Sigmoid colon (tissue), 7 donors: ENCODE measurements at regions of chr19 and their contacts with region 1.

Region 1: GRCh38 chr19:5690125-5690954 is at the start of gene RPL36:
- DNase-seq: peak; percentile 99
- H3K4me3 ChIP-seq: peak within 1 kb of the TSS; percentile 61 to 85 (median 67)
- H3K27ac ChIP-seq: peak within 1 kb of the TSS; percentile 89 to 96 (median 91)
- H3K4me1 ChIP-seq: peaks cover 0 to 46% (median 37%) of the 10 kb centered on the region in 4 donors
- H3K27me3 ChIP-seq: no peaks in the 10 kb centered on the region
- CTCF ChIP-seq: peak; percentile 94 to 97 (median 97)
- EP300 ChIP-seq: no peak
- POLR2A ChIP-seq: peak; percentile 90 to 93
- total RNA-seq, gene RPL36: 593 to 1,408 (median 902) TPM

Region 2: GRCh38 chr19:5345895-5346386 is 344.4 kb before region 1 on chr19:
- intact Hi-C with region 1: no loop called
- DNase-seq: no peak
- H3K4me3 ChIP-seq: no peak overlapping the region
- H3K27ac ChIP-seq: no peak overlapping the region
- H3K4me1 ChIP-seq: peaks cover 0 to 2% (median 2%) of the 10 kb centered on the region in 4 donors
- H3K27me3 ChIP-seq: peaks cover 0 to 4% (median 0%) of the 10 kb centered on the region in 3 donors
- CTCF ChIP-seq: no peak
- EP300 ChIP-seq: no peak
- POLR2A ChIP-seq: no peak

Region 3: DNA sequence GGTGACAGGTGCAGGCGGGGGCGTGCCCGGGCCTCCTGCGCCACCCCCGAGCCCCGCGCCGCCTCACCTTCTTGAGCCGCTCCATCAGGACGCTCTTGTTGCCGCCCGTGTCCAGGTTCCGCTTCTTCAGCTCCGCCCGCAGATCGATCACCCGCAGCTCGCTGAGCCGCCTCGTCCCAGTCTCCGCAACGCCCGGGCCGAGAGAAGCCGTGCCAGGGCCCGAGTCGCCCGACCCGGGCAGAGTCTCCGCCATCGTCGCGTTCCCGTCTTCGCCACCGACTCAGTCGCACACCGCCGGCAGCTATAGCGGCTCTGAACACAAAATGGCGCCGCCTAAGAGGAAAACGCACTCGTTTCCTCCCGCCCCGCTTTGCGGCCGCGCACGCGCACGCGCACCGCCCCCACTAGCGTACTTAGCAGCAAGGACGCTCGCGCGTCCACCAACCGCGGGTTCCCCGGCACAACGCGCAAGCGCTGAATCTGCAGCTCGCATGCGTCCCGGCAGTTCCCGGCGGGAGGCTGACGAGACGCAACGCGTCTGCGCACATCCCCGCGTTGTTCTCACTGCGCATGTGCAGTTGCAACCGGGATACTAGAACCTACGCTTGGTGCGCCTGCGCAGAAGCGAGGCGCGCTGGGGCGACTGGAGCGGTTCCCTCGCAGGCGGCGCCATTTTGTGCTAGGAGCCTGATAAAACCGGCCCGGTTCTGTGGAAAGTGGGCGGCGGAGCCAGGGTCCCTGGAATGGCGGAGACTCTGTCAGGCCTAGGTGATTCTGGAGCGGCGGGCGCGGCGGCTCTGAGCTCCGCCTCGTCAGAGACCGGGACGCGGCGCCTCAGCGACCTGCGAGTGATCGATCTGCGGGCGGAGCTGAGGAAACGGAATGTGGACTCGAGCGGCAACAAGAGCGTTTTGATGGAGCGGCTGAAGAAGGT is 67.6 kb before region 1 on chr19 and contains the starts of genes SAFB and SAFB2:
- intact Hi-C with region 1: loop called (anchors 2 kb)
- DNase-seq: peak; percentile 100
- H3K4me3 ChIP-seq: peak within 1 kb of the TSS; percentile 78 to 95 (median 88)
- H3K27ac ChIP-seq: peak within 1 kb of the TSS; percentile 95 to 99 (median 98)
- H3K4me1 ChIP-seq: peaks cover 0 to 72% (median 67%) of the 10 kb centered on the region in 4 donors
- H3K27me3 ChIP-seq: no peaks in the 10 kb centered on the region
- CTCF ChIP-seq: no peak
- EP300 ChIP-seq: peak in 1 of 4 donors; percentile 14
- POLR2A ChIP-seq: peak; percentile 95 to 96
- total RNA-seq, gene SAFB: 48.9 to 75.9 (median 60.4) TPM
- total RNA-seq, gene SAFB2: 22.8 to 80.0 (median 38.1) TPM

Region 4: DNA sequence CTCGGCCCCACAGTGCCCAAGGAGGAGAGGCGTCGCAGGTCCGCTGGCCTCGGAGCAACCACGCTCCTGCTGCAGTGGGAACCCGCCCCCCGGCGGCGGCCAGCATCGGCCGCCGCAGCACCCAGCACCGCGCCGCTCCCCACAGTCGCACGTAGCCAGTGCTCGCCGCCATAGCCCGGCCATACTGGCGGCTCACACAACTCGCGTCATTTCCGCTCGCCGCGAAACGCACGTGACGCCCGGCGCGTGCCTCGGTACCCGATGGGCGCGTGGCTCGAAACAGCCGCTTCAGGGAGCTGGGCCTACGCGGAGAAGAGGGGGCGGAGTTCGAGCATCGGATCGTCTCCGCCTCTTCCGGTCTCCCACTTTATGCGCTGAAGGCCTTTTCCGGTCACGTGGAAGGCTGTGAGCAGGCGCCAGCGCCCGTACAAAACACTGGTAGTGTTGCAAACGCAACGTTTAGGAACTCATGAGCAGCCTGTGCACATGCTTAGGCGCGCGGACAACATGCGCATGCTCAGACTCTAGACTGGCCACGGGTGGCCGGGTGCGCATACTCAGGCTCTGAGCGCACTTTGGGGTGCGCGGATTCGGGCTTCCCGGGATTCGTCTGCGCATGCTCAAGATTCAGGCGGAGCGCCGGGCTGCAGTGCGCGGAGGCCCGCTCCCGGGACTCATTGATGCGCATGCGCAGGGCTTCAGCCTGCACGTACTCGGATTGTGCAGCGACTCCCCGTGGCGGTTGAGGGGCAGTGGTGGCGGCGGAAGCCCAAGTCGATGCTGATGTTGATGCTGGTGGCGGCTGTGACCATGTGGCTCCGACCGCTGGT is 29.8 kb after region 1 on chr19 and contains the starts of genes CATSPERD and LONP1:
- intact Hi-C with region 1: loop called (anchors 2 kb)
- DNase-seq: peak; percentile 99
- H3K4me3 ChIP-seq: peak within 1 kb of the TSS; percentile 70 to 94 (median 92)
- H3K27ac ChIP-seq: peak within 1 kb of the TSS; percentile 89 to 97 (median 97)
- H3K4me1 ChIP-seq: peaks cover 0 to 30% (median 26%) of the 10 kb centered on the region in 4 donors
- H3K27me3 ChIP-seq: no peaks in the 10 kb centered on the region
- CTCF ChIP-seq: peak; percentile 89 to 98 (median 94)
- EP300 ChIP-seq: peak in 2 of 4 donors; percentile 44 to 93
- POLR2A ChIP-seq: peak; percentile 42 to 48
- total RNA-seq, gene CATSPERD: not detected
- total RNA-seq, gene LONP1: 30.5 to 48.5 (median 36.6) TPM

Region 5: GRCh38 chr19:5904352-5905113 is 214.2 kb after region 1 on chr19 and contains the start of gene VMAC:
- intact Hi-C with region 1: loop called (anchors 5 kb)
- DNase-seq: peak; percentile 100
- H3K4me3 ChIP-seq: peak within 1 kb of the TSS; percentile 81 to 91 (median 90)
- H3K27ac ChIP-seq: peak within 1 kb of the TSS; percentile 84 to 94 (median 92)
- H3K4me1 ChIP-seq: peaks cover 0 to 34% (median 30%) of the 10 kb centered on the region in 4 donors
- H3K27me3 ChIP-seq: no peaks in the 10 kb centered on the region
- CTCF ChIP-seq: no peak
- EP300 ChIP-seq: no peak
- POLR2A ChIP-seq: no peak
- total RNA-seq, gene VMAC: 6.1 to 14.4 (median 8.1) TPM